ENCODE measurements at regions of chr2 and their contacts with region 1.

Region 1: DNA sequence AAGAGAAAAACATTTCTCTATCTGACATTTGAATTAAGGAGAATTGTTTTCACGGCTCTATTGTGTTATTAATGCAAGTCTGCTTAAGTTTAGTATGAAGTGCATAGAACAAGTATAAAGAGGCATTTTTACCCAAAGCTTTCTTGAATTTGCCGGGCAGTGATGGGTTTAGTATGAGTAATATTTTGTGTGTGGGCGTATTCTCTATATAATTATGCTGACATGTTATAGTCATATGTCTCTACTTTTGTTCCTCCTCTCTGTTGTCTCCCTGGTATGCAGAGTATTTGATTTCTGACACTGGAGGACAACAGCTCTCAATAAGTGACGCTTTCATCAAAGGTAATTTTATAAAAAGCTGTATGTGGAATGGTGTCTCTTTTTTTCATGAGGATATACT is 45.9 kb downstream of the PIKFYVE start:
- DNase-seq: no peak
- H3K4me3 ChIP-seq: no peak overlapping the region
- H3K27ac ChIP-seq: no peak overlapping the region
- H3K4me1 ChIP-seq: no peaks in the 10 kb centered on the region
- H3K27me3 ChIP-seq: no peaks in the 10 kb centered on the region
- CTCF ChIP-seq: no peak
- POLR2A ChIP-seq: no peak

Region 2: DNA sequence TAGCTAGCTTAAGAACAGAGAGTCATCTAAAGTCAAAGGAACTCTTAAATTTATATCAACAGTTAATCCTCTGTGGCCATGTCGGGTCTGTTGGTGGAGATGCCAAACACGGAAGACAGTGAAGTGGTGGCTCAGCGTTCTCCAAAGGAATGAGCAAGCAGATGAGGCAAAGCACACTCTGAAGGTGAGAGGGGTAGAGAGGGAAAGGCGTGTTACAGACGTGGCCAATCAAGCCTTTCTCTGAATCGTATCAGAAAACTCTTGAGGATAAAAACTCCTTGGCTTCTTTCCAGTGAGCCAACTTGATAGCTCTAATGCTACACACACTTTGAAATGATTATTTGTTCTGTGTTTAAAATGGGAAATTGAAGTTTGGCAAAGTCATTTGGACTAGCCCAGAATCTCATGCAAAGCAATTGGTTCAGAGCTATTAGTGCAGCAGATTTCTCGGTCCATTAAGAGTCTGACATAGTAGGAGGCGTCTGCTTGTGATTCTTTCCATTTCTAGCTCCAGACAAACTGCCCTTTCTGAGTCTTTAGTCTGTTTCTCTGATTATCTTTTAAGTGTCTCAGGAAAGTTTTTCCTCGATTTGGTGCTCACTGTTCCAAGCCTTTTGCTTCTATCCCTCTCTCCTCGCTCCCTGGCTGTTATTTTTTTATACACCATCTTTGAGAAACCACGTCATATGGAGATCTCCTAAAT is 1430.1 kb before region 1 on chr2:
- intact Hi-C with region 1: loop called (anchors 5 kb)
- DNase-seq: no peak
- H3K4me3 ChIP-seq: no peak overlapping the region
- H3K27ac ChIP-seq: no peak overlapping the region
- H3K4me1 ChIP-seq: no peaks in the 10 kb centered on the region
- H3K27me3 ChIP-seq: no peaks in the 10 kb centered on the region
- CTCF ChIP-seq: no peak
- POLR2A ChIP-seq: no peak

Measured in vagina (tissue), 2 donors.